WTC11 (cell line): ENCODE measurements at regions of chrX and their contacts with region 1.

Region 1: DNA sequence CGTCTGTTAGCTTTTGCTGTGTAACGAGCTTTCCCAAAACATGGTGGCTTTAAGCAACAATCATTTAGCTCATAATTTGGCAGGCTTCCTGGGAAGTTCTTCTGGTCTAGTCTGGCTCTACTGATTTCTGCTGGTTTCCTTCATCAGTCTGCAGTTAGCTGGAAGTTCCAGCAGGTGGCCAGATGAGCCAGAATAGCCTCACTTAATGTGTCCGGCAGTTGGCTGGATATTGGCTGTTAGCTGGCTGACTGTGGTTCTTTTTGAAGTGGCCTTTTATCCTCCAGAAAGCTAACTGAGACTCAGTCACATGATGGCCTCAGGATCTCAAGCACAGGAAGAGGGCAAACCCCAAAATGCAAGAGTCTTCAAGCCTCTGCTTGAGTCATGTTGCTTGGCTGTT is 34.9 kb downstream of the FTHL17 start:
- DNase-seq: peak; percentile 36
- ATAC-seq: peak; percentile 91
- H3K4me3 Mint-ChIP-seq: no peak overlapping the region
- H3K27ac Mint-ChIP-seq: no peak overlapping the region
- H3K4me1 Mint-ChIP-seq: peaks cover 3% of the 10 kb centered on the region; the same call in 1 of the 2 replicates
- H3K27me3 Mint-ChIP-seq: no peaks in the 10 kb centered on the region
- CTCF ChIP-seq: peak; percentile 29; the same call in 1 of the 2 replicates

Region 2: GRCh38 chrX:31293409-31293808 is 256.5 kb after region 1 on chrX:
- CTCF ChIA-PET with region 1: interaction called, 10 read pairs
- POLR2A ChIA-PET with region 1: no interaction called
- DNase-seq: no peak
- ATAC-seq: peak; percentile 47
- H3K4me3 Mint-ChIP-seq: no peak overlapping the region
- H3K27ac Mint-ChIP-seq: no peak overlapping the region
- H3K4me1 Mint-ChIP-seq: peaks cover 10% of the 10 kb centered on the region
- H3K27me3 Mint-ChIP-seq: no peaks in the 10 kb centered on the region
- CTCF ChIP-seq: no peak